Left lung (tissue), 14 donors: ENCODE measurements at regions of chr11 and their contacts with region 1.

Region 1: GRCh38 chr11:111938687-111939160 is 1.6 kb downstream of the DIXDC1 start:
- DNase-seq: no peak
- ATAC-seq: peak; percentile 34
- H3K4me3 ChIP-seq: peak overlapping the region in 1 of 2 donors; percentile 62
- H3K27ac ChIP-seq: no peak overlapping the region
- H3K4me1 ChIP-seq: peaks cover 13 to 40% of the 10 kb centered on the region in 2 donors
- H3K27me3 ChIP-seq: no peaks in the 10 kb centered on the region
- CTCF ChIP-seq: no peak

Region 2: GRCh38 chr11:111236383-111236782 is 702.3 kb before region 1 on chr11:
- intact Hi-C with region 1: no loop called
- DNase-seq: no peak
- ATAC-seq: no peak
- H3K4me3 ChIP-seq: no peak overlapping the region
- H3K27ac ChIP-seq: no peak overlapping the region
- H3K4me1 ChIP-seq: peaks cover 0 to 4% of the 10 kb centered on the region in 2 donors
- H3K27me3 ChIP-seq: no peaks in the 10 kb centered on the region
- CTCF ChIP-seq: no peak

Region 3: DNA sequence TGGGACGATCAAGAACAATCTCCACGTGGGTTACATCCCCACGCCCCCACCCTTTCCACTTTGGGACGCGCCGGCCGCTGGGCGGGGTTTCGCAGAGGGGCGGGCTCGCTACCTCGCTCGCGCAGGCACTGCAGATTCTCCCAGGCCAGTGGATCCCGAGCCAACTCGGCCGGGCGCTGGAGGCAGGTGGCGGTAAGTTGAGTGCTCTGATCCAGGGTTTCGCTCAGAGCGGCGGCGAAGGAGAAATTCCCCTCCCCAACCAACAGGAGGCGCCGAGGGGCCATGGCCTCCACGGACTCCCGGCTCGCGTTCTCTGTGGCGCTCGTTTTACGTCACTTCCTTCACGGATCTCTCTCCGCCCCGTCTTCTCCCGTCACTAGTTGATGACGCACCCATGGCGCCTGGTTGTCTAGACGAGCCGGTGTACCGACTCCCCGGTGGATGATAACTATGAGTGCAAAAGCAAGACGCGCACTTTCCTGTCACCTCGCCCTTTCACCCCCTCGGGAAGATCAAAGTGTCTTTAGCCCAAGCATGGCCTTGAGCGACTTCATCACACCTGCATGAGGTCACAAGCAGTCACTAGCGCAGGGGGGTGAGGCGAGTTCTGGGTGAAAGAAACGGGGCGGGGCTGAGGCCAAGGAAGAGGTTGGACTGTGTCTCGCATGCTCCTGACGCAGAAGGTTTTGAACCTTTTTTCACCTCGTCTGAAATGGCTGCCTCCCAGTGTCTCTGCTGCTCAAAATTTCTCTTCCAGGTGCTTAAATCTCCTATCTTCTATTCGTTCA is 59.7 kb before region 1 on chr11 and contains the starts of genes CFAP68 and FDXACB1:
- intact Hi-C with region 1: no loop called
- DNase-seq: peak; percentile 96 to 98 (median 98)
- ATAC-seq: peak; percentile 96
- H3K4me3 ChIP-seq: peak within 1 kb of the TSS; percentile 52 to 73
- H3K27ac ChIP-seq: peak within 1 kb of the TSS; percentile 92 to 97
- H3K4me1 ChIP-seq: peaks cover 5 to 19% of the 10 kb centered on the region in 2 donors
- H3K27me3 ChIP-seq: no peaks in the 10 kb centered on the region
- CTCF ChIP-seq: peak; percentile 89 to 98
- polyA plus RNA-seq, gene CFAP68: 36.1 to 46.7 (median 38.6) TPM
- polyA plus RNA-seq, gene FDXACB1: 4.3 to 5.5 (median 4.9) TPM

Region 4: DNA sequence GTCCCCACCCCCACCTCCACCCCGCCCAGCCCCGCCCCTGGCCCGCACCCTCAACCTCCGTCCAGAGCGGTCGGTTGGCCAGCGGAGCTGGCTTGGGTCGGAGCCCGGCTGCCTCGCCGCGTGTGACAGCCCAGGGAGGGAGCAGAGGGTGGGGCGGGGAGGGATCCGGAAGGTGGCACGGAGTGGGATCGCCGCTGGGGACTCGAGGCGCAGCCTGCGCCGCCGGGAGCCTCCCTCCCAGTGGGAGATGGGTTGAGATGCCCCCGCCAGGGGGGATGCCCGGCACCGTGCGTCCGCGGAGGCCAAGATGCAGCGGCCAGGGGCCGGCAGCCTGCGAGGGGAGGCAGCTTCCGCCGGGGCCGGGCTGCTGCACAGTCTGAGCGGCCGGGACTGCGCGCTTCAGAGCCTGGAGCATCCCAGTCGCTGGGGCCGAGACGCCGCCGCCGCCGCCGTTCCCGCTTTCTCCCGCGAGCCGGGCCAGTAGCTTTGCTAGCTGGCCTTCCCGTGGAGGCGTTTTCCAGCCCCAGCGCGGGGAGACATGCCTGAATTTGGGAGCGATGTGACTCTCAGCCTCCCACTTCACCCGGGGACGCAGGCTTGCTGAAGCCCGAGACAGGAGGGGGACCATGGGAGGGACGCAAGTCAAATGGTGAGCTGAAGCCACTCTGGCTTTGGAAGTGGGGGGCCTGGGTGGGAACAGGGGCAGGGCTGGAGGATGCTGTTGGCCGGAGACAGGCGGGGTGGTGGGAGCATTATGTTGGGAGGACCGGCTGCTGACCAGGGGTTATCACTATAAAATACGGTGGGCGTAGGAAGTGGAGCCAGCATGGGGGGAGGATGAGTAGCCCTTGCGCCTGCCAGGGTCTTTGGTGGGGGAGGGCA is 38.7 kb after region 1 on chr11:
- intact Hi-C with region 1: loop called in 1 of 2 experiments (anchors 5 kb)
- DNase-seq: peak; percentile 36 to 88 (median 60)
- ATAC-seq: peak; percentile 74
- H3K4me3 ChIP-seq: peak overlapping the region; percentile 48 to 52
- H3K27ac ChIP-seq: peak overlapping the region; percentile 38 to 73
- H3K4me1 ChIP-seq: peaks cover 0 to 22% of the 10 kb centered on the region in 2 donors
- H3K27me3 ChIP-seq: peaks cover 0 to 24% of the 10 kb centered on the region in 2 donors
- CTCF ChIP-seq: no peak

Region 5: GRCh38 chr11:112086422-112087191 is 147.9 kb after region 1 on chr11 and contains the starts of genes SDHD and TIMM8B:
- intact Hi-C with region 1: no loop called
- DNase-seq: peak; percentile 96 to 98 (median 96)
- ATAC-seq: peak; percentile 95
- H3K4me3 ChIP-seq: peak within 1 kb of the TSS; percentile 89 to 91
- H3K27ac ChIP-seq: peak within 1 kb of the TSS; percentile 46 to 78
- H3K4me1 ChIP-seq: peaks cover 8 to 42% of the 10 kb centered on the region in 2 donors
- H3K27me3 ChIP-seq: no peaks in the 10 kb centered on the region
- CTCF ChIP-seq: no peak
- polyA plus RNA-seq, gene SDHD: 113 to 127 (median 124) TPM
- polyA plus RNA-seq, gene TIMM8B: 55.7 to 64.5 (median 60.8) TPM